ENCODE measurements at regions of chrX and their contacts with region 1.

Region 1: GRCh38 chrX:40169193-40170101 is 71.7 kb upstream of the BCOR start:
- DNase-seq: peak; percentile 90
- H3K4me3 Mint-ChIP-seq: peak overlapping the region; percentile 90
- H3K27ac Mint-ChIP-seq: peak overlapping the region; percentile 100
- H3K4me1 Mint-ChIP-seq: peaks cover 37% of the 10 kb centered on the region
- H3K27me3 Mint-ChIP-seq: no peaks in the 10 kb centered on the region

Region 2: DNA sequence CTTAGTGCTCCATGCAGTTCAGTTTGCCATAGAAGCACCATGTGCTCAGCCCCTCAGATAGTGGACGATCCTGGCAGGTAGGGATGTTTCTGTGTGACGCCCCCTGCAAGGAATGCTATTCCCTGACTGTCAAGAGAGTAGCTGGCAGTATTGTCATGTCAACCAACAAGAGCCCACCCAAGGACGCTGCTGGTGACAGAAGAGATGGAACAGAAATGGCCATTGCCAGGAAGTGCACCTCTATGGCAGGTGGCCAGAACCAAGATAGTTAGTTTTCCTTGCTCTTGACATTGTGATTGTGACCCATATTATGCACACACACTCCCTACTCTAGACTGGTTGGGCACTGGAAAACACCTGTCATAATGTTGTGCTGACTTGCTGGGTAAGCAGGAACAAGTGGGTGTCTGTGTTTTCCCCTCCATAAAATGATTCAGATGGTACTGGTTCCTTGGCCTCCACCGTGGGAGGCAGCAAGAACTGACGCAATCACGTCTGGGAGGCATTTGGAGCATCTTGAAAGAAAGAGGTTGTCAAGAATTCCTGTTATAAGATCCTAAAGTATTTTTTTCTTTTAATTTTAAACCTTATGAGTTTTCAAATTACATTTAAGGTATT is 860.3 kb before region 1 on chrX:
- CTCF ChIA-PET with region 1: no interaction called
- POLR2A ChIA-PET with region 1: no interaction called
- intact Hi-C with region 1: loop called (anchors 5 kb)
- DNase-seq: peak; percentile 79
- H3K4me3 Mint-ChIP-seq: no peak overlapping the region
- H3K27ac Mint-ChIP-seq: peak overlapping the region; percentile 100
- H3K4me1 Mint-ChIP-seq: peaks cover 78% of the 10 kb centered on the region
- H3K27me3 Mint-ChIP-seq: no peaks in the 10 kb centered on the region

Region 3: GRCh38 chrX:40013266-40014195 is 155.9 kb before region 1 on chrX:
- CTCF ChIA-PET with region 1: no interaction called
- POLR2A ChIA-PET with region 1: interaction called, 3 read pairs
- intact Hi-C with region 1: loop called (anchors 5 kb)
- DNase-seq: peak; percentile 53
- H3K4me3 Mint-ChIP-seq: peak overlapping the region; percentile 71
- H3K27ac Mint-ChIP-seq: peak overlapping the region; percentile 66
- H3K4me1 Mint-ChIP-seq: peaks cover 18% of the 10 kb centered on the region
- H3K27me3 Mint-ChIP-seq: peaks cover 17% of the 10 kb centered on the region

Region 4: DNA sequence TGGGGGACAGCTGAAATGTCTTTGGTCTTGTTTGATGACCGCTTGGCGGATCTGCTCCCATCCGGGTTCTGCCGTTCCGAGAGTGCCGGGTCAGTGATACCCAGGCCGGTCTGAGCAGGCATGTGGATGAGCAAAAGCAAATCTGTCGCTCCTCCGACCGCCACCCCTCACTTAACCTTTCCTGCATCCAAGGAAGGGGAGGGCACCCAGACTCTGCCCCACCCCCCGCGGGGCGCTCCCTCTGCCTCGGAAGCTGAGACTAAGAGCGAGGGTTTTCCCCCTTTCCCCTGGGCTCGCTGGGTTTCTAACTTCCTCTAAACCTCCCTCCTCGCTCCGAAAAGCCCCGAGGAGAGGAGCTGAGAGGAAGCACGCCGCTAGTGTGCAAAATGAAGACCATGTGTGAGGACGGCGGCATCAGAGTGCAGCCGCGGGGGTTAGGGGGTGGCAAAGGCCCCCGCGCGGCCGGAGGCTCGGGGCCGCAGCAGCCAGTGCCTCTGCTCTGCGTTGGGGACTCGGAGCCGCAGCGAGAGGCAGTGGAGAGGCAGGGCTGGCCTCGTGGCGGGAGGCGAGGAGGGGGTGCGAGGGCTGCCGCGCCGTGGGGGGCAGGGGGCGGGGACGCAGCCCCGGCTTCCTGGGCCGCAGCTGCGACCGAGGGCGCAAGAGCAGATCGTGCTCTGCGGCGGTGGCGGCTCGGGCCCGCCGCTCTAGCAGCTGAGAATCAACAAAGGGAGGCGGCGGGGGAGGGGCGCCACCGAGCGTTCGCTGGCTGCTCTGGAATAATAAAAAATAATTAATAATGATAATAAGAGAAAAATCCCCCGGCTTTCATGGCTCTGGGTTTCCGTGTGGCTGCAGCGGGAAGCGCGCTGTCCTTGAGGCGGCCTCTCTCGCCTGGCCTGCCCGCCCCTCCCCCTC is 15.9 kb before region 1 on chrX:
- CTCF ChIA-PET with region 1: no interaction called
- POLR2A ChIA-PET with region 1: interaction called, 5 read pairs
- intact Hi-C with region 1: loop called (anchors 2 kb)
- DNase-seq: peak; percentile 85
- H3K4me3 Mint-ChIP-seq: peak overlapping the region; percentile 74
- H3K27ac Mint-ChIP-seq: peak overlapping the region; percentile 58
- H3K4me1 Mint-ChIP-seq: peaks cover 7% of the 10 kb centered on the region
- H3K27me3 Mint-ChIP-seq: no peaks in the 10 kb centered on the region

Region 5: GRCh38 chrX:40188573-40189432 is 19.4 kb after region 1 on chrX:
- CTCF ChIA-PET with region 1: no interaction called
- POLR2A ChIA-PET with region 1: no interaction called
- intact Hi-C with region 1: no loop called
- DNase-seq: no peak
- H3K4me3 Mint-ChIP-seq: no peak overlapping the region
- H3K27ac Mint-ChIP-seq: peak overlapping the region; percentile 36
- H3K4me1 Mint-ChIP-seq: peaks cover 11% of the 10 kb centered on the region
- H3K27me3 Mint-ChIP-seq: no peaks in the 10 kb centered on the region

Region 6: DNA sequence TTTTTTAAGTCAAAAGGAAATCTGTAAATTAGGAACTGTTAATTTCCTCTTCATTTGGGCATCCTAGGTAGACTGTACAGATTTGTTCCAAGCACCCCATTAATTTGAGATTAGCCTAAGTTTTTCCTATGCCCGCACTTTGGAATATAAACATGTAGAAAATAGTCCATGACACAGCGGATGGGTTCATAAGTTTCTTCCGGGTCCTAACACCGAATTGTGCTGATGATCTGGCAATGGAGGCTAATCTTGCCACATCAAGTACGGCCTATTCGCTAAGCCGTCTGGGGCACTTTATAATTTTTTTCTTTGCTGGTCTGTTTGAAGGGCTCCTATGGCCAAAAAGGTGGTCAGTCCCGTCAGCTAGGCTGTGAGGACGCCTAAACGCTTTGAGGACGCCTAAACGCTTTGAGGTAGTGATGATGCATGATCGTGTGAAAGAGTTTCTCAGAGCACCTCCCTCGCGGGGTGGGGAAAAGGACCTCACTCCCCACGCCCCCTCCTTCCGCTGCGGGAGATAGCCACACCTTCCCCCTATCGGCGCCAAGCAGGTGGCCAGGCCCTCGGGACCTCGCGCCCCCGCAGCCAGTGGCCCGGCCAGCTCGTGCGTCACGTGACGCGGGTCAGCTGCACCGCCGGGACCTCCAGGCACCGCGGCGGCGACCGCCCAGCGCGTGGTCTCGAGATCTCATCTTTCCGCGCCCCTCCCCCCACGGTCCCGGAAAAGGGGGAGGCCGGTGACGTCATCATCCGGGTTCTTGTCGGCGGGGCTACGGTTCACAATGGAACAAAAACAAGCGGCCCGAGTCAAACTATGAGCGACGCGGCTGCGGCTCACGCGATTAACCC is 914.8 kb after region 1 on chrX:
- CTCF ChIA-PET with region 1: no interaction called
- POLR2A ChIA-PET with region 1: no interaction called
- intact Hi-C with region 1: loop called (anchors 10 kb)
- DNase-seq: peak; percentile 96
- H3K4me3 Mint-ChIP-seq: peak overlapping the region; percentile 80
- H3K27ac Mint-ChIP-seq: peak overlapping the region; percentile 100
- H3K4me1 Mint-ChIP-seq: peaks cover 14% of the 10 kb centered on the region
- H3K27me3 Mint-ChIP-seq: no peaks in the 10 kb centered on the region